ENCODE measurements at regions of chr10 and their contacts with region 1.

Region 1: DNA sequence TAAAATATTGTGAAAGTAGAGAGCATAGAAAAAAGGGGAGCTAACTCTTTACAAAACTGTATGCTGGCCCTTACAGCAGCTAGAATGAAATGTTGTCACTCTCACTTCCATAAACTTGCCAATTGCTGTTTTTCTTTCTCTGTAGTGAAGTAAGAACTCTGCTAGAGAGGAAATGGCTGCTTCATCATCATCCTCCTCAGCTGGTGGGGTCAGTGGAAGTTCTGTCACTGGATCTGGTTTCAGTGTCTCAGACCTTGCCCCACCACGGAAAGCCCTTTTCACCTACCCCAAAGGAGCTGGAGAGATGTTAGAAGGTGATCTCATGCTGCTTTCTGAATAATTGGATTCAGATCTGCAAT is 7.6 kb upstream of the ASCC1 start:
- DNase-seq: no peak
- H3K4me3 Mint-ChIP-seq: no peak overlapping the region
- H3K27ac Mint-ChIP-seq: peak overlapping the region; percentile 12
- H3K4me1 Mint-ChIP-seq: peaks cover 44% of the 10 kb centered on the region
- H3K27me3 Mint-ChIP-seq: no peaks in the 10 kb centered on the region

Region 2: GRCh38 chr10:71957546-71958275 is 266.0 kb before region 1 on chr10:
- intact Hi-C with region 1: loop called (anchors 10 kb)
- DNase-seq: no peak
- H3K4me3 Mint-ChIP-seq: no peak overlapping the region
- H3K27ac Mint-ChIP-seq: no peak overlapping the region
- H3K4me1 Mint-ChIP-seq: no peaks in the 10 kb centered on the region
- H3K27me3 Mint-ChIP-seq: peaks cover 45% of the 10 kb centered on the region

Region 3: DNA sequence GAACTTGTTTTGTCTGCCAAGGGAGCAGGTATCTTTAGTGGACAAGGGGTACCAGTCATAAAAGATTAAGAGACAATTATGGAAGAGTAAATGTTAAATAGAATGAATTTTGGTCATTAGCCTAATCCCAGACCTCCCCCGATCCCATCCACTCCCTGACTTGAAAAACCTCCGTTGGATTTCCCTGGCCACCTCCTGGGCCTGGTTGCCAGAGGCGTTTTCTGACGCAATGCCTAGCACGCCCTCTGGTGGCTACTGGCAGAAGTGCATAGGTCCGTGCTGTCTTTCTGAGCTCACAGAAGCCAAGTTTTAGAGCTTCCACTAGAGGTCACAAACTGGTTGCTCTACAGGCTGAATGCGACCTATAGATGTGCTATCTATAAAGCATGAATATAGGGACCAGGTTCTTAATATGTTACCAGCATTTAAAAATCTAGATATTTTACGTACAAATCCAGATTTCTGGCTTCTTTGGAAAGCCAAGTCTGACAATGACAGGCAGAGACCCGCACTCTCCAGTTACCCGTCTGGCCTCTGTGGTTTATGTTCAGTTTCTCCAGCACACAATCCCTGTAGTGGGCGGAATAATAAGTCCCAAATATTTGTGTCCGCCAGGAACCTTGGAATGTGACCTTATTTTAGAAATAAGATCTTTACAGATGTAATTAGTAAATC is 175.1 kb before region 1 on chr10:
- intact Hi-C with region 1: loop called (anchors 1 kb)
- DNase-seq: peak; percentile 75
- H3K4me3 Mint-ChIP-seq: no peak overlapping the region
- H3K27ac Mint-ChIP-seq: peak overlapping the region; percentile 0
- H3K4me1 Mint-ChIP-seq: peaks cover 12% of the 10 kb centered on the region
- H3K27me3 Mint-ChIP-seq: peaks cover 3% of the 10 kb centered on the region

Region 4: GRCh38 chr10:72107325-72108003 is 116.3 kb before region 1 on chr10:
- intact Hi-C with region 1: no loop called
- DNase-seq: no peak
- H3K4me3 Mint-ChIP-seq: peak overlapping the region; percentile 79
- H3K27ac Mint-ChIP-seq: peak overlapping the region; percentile 85
- H3K4me1 Mint-ChIP-seq: peaks cover 72% of the 10 kb centered on the region
- H3K27me3 Mint-ChIP-seq: peaks cover 2% of the 10 kb centered on the region

Region 5: GRCh38 chr10:72126184-72126871 is 97.4 kb before region 1 on chr10:
- intact Hi-C with region 1: loop called (anchors 1 kb)
- DNase-seq: no peak
- H3K4me3 Mint-ChIP-seq: no peak overlapping the region
- H3K27ac Mint-ChIP-seq: no peak overlapping the region
- H3K4me1 Mint-ChIP-seq: peaks cover 39% of the 10 kb centered on the region
- H3K27me3 Mint-ChIP-seq: no peaks in the 10 kb centered on the region

Region 6: DNA sequence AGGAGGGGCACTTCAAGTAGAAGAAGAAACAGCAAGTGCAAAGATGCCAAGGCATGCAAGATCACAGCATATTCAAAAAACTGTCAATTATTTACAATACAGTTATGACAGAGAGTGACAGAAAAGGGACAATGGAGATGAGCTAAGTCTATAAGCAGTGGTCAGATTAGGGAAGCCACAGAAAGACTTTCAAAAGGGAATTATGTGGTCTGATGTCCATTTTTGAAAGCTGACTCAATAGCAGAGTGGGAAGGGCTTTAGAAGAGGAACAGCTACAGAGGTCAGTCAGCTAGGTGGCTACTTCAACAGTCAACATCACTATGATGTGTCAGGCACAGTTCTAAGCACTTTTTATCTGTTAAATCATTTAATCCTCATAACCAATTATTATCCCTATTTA is 90.2 kb before region 1 on chr10:
- intact Hi-C with region 1: loop called (anchors 2 kb)
- DNase-seq: no peak
- H3K4me3 Mint-ChIP-seq: no peak overlapping the region
- H3K27ac Mint-ChIP-seq: peak overlapping the region; percentile 1
- H3K4me1 Mint-ChIP-seq: peaks cover 29% of the 10 kb centered on the region
- H3K27me3 Mint-ChIP-seq: no peaks in the 10 kb centered on the region

Region 7: GRCh38 chr10:72248468-72249151 is 24.9 kb after region 1 on chr10:
- intact Hi-C with region 1: loop called (anchors 2 kb)
- DNase-seq: peak; percentile 75
- H3K4me3 Mint-ChIP-seq: peak overlapping the region; percentile 76
- H3K27ac Mint-ChIP-seq: peak overlapping the region; percentile 98
- H3K4me1 Mint-ChIP-seq: peaks cover 83% of the 10 kb centered on the region
- H3K27me3 Mint-ChIP-seq: no peaks in the 10 kb centered on the region

Region 8: DNA sequence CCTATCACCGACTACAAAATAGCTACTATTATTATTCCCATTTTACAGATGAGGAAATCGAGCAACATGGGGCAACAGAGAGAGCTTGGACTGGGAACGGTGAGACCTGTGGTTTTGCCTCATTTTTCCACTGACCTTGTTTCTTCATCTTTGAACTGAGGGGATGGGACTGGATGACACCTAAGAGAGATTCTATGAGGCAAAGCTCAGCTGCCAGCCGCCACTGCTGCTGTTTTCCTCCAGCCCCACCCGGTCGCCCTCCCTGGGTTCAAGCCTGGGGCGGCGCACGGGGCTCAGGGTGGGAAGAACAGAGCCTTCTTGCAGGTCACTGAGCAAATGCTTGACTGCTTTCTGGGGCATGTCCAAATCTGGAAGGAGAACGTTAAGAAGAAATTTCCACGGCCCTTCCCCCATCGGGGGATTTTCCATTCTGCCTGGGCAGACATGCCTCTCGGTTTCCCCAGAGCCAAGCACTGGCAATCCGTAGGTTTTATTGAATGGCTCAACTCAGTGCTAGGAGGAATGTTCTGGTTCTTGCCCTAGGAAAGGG is 62.3 kb after region 1 on chr10:
- intact Hi-C with region 1: no loop called
- DNase-seq: no peak
- H3K4me3 Mint-ChIP-seq: no peak overlapping the region
- H3K27ac Mint-ChIP-seq: peak overlapping the region; percentile 37
- H3K4me1 Mint-ChIP-seq: peaks cover 37% of the 10 kb centered on the region
- H3K27me3 Mint-ChIP-seq: no peaks in the 10 kb centered on the region